AG04450 (cell line): ENCODE measurements at regions of chr9 and their contacts with region 1.

Region 1: DNA sequence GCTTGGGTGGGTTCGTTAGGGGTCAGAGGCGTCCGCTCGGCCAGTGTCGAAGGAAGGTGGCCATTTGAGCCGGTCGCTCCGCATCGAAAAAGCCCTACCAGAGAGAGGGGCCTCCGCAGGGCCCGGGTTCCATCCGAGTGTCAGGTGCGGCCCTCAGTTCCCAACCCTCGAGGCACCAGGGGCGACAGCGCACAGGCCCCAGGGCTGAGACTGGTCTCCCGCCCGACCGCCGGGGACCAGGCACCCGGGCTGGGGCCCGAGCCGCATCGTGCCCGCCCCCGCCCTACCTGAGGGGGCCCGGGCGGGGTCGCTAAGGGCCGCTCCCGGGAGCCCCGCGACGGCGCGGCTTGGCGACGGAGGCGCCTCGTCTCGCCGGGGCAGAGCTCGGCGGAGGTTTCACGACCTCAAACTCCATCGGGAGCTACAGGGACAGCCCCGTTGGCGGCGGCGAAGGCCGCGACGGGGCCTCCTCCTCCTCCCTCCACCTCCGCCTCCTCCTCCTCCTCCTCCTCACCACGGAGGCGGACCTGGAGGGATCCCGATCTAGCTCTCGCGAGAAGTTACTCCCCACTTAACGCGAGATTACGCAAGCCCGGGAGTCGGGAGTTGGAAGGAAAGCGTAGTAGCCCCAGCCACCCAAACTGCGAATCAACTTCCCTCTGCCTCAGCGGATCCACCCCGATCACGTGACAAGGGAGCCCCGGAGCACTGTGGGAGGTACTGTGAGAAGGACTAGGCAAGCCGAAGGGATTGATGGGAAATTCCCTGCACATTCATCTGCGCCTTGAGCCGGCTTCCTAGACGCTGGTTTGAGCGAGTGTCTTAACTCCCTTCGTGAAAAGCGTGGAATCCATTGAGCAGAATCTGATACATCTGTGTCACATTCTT is at the start of gene RC3H2:
- DNase-seq: peak; percentile 100
- H3K4me3 ChIP-seq: peak within 1 kb of the TSS; percentile 82
- H3K27ac ChIP-seq: peak within 1 kb of the TSS; percentile 69
- H3K27me3 ChIP-seq: no peaks in the 10 kb centered on the region
- CTCF ChIP-seq: no peak
- polyA plus RNA-seq, gene RC3H2: 41.5 and 47.2 TPM in 2 replicates

Region 2: DNA sequence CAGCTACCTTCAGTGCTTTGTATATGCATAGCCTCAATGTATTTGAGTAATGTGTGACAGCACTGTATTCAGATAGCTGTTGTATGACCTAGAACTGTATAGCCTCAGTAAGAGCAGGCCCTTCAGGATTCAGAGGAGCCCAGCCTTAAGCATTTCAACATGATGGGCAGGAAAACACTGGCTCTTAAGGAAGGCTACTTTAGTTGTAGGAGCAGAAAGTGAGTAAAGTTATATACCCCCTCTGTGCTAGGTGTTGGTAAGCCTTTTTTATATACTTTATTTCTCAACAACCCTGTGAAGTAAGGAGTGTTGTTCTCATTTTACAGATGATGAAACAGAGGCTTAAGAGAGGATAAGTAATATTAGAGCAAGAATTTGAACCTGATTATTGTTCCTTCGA is 126.9 kb after region 1 on chr9:
- CTCF ChIA-PET with region 1: no interaction called
- POLR2A ChIA-PET with region 1: interaction called, 11 read pairs
- DNase-seq: no peak
- H3K4me3 ChIP-seq: no peak overlapping the region
- H3K27ac ChIP-seq: no peak overlapping the region
- H3K27me3 ChIP-seq: no peaks in the 10 kb centered on the region
- CTCF ChIP-seq: no peak